ENCODE measurements at regions of chr1 and their contacts with region 1.

Region 1: DNA sequence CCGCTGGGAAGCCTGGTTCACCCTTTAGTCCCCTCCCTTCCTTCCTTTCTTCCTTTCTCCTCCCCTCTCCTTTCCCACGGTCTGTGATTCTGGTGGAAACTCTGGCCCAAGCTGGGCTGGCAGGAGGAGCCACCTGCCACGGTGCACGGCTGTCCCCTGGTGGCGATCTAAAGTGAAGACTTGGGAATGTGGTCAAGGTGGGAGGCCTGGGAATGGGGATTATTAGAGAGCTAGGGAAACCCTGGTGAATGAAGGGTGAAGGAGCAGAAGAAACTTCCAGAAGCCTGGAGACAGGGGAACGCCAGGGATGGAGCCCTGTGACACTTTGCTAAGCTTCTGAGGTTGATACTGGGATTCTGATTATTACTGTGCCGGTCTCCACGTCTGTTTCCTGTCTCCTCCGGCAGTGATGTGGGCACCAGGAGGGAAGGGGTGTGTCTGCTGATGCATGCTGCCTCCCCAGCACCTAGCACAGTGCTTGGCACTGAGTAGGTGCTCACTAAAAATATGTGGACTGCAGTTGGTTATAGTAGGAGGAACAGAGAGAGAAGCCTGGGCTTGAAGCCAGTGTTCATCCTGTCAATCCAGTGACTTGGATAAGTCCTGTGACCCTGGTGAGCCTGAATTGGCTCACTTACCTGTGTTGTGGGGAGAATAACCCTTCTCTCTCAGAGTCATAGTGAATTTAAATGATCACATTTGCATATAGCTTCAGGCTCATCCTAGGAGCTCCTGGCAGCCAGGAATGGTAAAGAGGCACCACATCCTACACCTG is 71.2 kb upstream of the NBPF3 start:
- DNase-seq: peak; percentile 37 to 83 (median 62)
- ATAC-seq: peak; percentile 60
- H3K4me3 ChIP-seq: no peak overlapping the region
- H3K4me3 Mint-ChIP-seq: no peak overlapping the region
- H3K27ac ChIP-seq: no peak overlapping the region
- H3K27ac Mint-ChIP-seq: no peak overlapping the region
- H3K4me1 ChIP-seq: peaks cover 7% of the 10 kb centered on the region
- H3K4me1 Mint-ChIP-seq: peaks cover 14% of the 10 kb centered on the region
- H3K27me3 ChIP-seq: no peaks in the 10 kb centered on the region
- H3K27me3 Mint-ChIP-seq: no peaks in the 10 kb centered on the region
- CTCF ChIP-seq: peak; percentile 100

Region 2: DNA sequence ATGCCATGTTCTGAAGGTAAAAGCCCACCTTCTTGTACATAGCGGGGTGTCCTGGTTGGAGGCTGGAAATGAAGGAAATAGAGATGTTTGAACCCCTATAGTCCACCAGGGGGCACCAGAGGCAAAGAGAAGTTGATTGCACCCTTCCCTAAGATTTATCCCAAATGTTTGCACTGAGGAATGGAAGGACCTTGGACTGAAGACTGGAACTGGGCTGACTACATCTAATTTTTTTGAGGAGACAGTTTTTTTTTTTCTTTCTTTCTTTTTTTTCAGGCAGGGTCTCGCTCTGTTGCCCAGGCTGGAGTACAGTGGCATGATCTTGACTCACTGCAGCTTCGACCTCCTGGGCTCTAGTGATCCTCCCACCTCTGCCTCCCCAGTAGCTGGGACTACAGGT is 136.7 kb before region 1 on chr1:
- CTCF ChIA-PET with region 1: interaction called, 43 read pairs
- POLR2A ChIA-PET with region 1: interaction called, 4 read pairs
- intact Hi-C with region 1: loop called (anchors 1 kb)
- DNase-seq: peak in 8 of 14 experiments; percentile 12 to 74 (median 32)
- ATAC-seq: peak; percentile 58
- H3K4me3 ChIP-seq: no peak overlapping the region
- H3K4me3 Mint-ChIP-seq: no peak overlapping the region
- H3K27ac ChIP-seq: no peak overlapping the region
- H3K27ac Mint-ChIP-seq: no peak overlapping the region
- H3K4me1 ChIP-seq: no peaks in the 10 kb centered on the region
- H3K4me1 Mint-ChIP-seq: no peaks in the 10 kb centered on the region
- H3K27me3 ChIP-seq: no peaks in the 10 kb centered on the region
- H3K27me3 Mint-ChIP-seq: no peaks in the 10 kb centered on the region
- CTCF ChIP-seq: peak; percentile 95

Region 3: GRCh38 chr1:21255278-21255942 is 113.3 kb before region 1 on chr1:
- CTCF ChIA-PET with region 1: interaction called, 175 read pairs
- POLR2A ChIA-PET with region 1: interaction called, 21 read pairs
- intact Hi-C with region 1: loop called (anchors 1 kb)
- DNase-seq: peak; percentile 78 to 90 (median 83)
- ATAC-seq: peak; percentile 87
- H3K4me3 ChIP-seq: no peak overlapping the region
- H3K4me3 Mint-ChIP-seq: no peak overlapping the region
- H3K27ac ChIP-seq: no peak overlapping the region
- H3K27ac Mint-ChIP-seq: peak overlapping the region; percentile 19
- H3K4me1 ChIP-seq: peaks cover 28% of the 10 kb centered on the region
- H3K4me1 Mint-ChIP-seq: peaks cover 25% of the 10 kb centered on the region
- H3K27me3 ChIP-seq: no peaks in the 10 kb centered on the region
- H3K27me3 Mint-ChIP-seq: no peaks in the 10 kb centered on the region
- CTCF ChIP-seq: peak; percentile 78

Region 4: DNA sequence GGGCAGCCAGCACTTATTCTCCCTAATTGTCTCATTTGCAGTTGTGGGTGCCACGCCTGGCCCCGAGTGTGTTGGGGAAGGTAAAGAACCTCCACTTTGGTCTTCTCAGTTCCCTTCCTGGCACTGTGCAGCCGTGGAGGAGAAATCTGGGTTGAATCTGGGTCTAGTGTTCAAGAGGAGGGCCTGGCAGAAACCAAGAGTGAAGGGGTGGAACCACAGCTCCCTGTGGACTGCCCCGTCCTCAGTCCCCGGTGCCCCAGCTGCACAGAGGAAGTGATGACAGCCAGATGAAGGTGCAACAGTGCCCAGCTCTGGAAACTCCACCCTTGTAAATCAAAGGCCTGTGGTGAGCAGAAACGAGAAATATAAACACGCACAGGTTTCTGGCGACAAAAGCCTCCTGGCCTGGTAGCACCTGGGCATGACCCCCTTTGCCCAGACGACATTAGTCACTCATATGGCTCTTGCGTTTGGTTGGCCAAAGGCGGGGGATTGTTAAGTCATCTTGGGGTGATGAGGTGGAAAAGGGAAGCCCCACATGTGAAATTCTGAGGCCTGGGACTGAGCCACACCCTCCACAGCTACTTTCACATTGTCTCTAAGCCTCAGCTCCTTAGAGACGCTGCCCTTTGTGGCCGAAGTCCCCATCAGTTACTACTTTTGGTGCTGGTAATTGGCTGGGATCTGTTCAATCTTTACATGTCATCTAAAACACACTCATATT is 74.3 kb before region 1 on chr1:
- CTCF ChIA-PET with region 1: interaction called, 10 read pairs
- POLR2A ChIA-PET with region 1: interaction called, 5 read pairs
- intact Hi-C with region 1: no loop called
- DNase-seq: peak; percentile 74 to 98 (median 84)
- ATAC-seq: peak; percentile 75
- H3K4me3 ChIP-seq: peak overlapping the region; percentile 61
- H3K4me3 Mint-ChIP-seq: peak overlapping the region; percentile 88
- H3K27ac ChIP-seq: peak overlapping the region; percentile 89 to 95
- H3K27ac Mint-ChIP-seq: peak overlapping the region; percentile 96
- H3K4me1 ChIP-seq: peaks cover 94% of the 10 kb centered on the region
- H3K4me1 Mint-ChIP-seq: peaks cover 80% of the 10 kb centered on the region
- H3K27me3 ChIP-seq: no peaks in the 10 kb centered on the region
- H3K27me3 Mint-ChIP-seq: no peaks in the 10 kb centered on the region
- CTCF ChIP-seq: no peak

Region 5: GRCh38 chr1:21334214-21335087 is 34.3 kb before region 1 on chr1:
- CTCF ChIA-PET with region 1: interaction called, 14 read pairs
- POLR2A ChIA-PET with region 1: interaction called, 4 read pairs
- intact Hi-C with region 1: no loop called
- DNase-seq: peak; percentile 60 to 96 (median 74)
- ATAC-seq: peak; percentile 80
- H3K4me3 ChIP-seq: peak overlapping the region; percentile 50
- H3K4me3 Mint-ChIP-seq: peak overlapping the region; percentile 92
- H3K27ac ChIP-seq: peak overlapping the region; percentile 81 to 89
- H3K27ac Mint-ChIP-seq: peak overlapping the region; percentile 98
- H3K4me1 ChIP-seq: peaks cover 97% of the 10 kb centered on the region
- H3K4me1 Mint-ChIP-seq: peaks cover 89% of the 10 kb centered on the region
- H3K27me3 ChIP-seq: no peaks in the 10 kb centered on the region
- H3K27me3 Mint-ChIP-seq: no peaks in the 10 kb centered on the region
- CTCF ChIP-seq: peak; percentile 66

Region 6: GRCh38 chr1:21659099-21659923 is 290.6 kb after region 1 on chr1:
- CTCF ChIA-PET with region 1: no interaction called
- POLR2A ChIA-PET with region 1: no interaction called
- intact Hi-C with region 1: loop called in 1 of 2 experiments (anchors 5 kb)
- DNase-seq: peak; percentile 64 to 92 (median 77)
- ATAC-seq: peak; percentile 97
- H3K4me3 ChIP-seq: no peak overlapping the region
- H3K4me3 Mint-ChIP-seq: peak overlapping the region; percentile 30
- H3K27ac ChIP-seq: no peak overlapping the region
- H3K27ac Mint-ChIP-seq: no peak overlapping the region
- H3K4me1 ChIP-seq: peaks cover 8% of the 10 kb centered on the region
- H3K4me1 Mint-ChIP-seq: peaks cover 6% of the 10 kb centered on the region
- H3K27me3 ChIP-seq: peaks cover 9 to 17% of the 10 kb centered on the region in 2 experiments
- H3K27me3 Mint-ChIP-seq: peaks cover 35% of the 10 kb centered on the region
- CTCF ChIP-seq: peak; percentile 81